Tibial artery (tissue), 4 donors: ENCODE measurements at regions of chr16 and their contacts with region 1.

Region 1: GRCh38 chr16:17348826-17349225 is 121.9 kb downstream of the XYLT1 start:
- DNase-seq: no peak
- H3K4me3 ChIP-seq: no peak overlapping the region
- H3K27ac ChIP-seq: no peak overlapping the region
- H3K4me1 ChIP-seq: peaks cover 7 to 46% (median 28%) of the 10 kb centered on the region in 4 donors
- H3K27me3 ChIP-seq: no peaks in the 10 kb centered on the region
- CTCF ChIP-seq: no peak

Region 2: DNA sequence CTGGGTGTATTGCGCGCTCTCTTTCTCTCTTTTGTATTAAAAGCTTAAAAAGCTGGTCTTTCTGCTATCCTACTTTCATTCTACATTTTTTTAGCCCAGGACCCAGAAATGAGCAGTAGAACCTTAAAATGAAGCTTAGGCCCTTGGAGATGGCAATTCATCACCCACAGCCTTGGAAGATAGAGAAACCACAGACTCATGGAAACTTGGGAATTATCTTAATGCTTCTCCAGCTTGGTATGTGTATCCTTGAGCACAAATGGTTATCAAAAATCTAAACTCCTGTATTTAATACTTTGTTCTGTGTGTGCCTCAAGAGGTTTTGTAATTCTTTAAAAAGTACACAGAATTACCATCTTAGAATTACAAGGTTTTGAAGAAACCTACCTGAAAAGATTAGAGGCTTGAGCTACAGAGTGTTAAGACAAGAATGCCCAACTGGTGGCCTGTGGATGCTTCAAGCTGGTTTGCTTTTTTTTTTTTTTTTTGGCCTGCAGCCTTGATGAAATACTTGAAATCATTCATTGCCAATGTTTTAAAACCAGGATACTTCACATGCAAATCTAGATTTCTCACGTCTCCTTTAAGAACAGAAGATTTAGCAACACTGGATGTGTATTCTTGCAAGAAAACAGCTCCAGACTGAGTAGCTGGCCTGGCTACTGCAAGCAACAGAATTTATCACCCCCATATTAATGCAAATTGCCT is 16.9 kb after region 1 on chr16:
- intact Hi-C with region 1: loop called (anchors 1 kb)
- DNase-seq: no peak
- H3K4me3 ChIP-seq: no peak overlapping the region
- H3K27ac ChIP-seq: no peak overlapping the region
- H3K4me1 ChIP-seq: peaks cover 0 to 59% (median 37%) of the 10 kb centered on the region in 4 donors
- H3K27me3 ChIP-seq: no peaks in the 10 kb centered on the region
- CTCF ChIP-seq: no peak